Heart left ventricle (tissue), 16 donors: ENCODE measurements at regions of chr14 and their contacts with region 1.

Region 1: DNA sequence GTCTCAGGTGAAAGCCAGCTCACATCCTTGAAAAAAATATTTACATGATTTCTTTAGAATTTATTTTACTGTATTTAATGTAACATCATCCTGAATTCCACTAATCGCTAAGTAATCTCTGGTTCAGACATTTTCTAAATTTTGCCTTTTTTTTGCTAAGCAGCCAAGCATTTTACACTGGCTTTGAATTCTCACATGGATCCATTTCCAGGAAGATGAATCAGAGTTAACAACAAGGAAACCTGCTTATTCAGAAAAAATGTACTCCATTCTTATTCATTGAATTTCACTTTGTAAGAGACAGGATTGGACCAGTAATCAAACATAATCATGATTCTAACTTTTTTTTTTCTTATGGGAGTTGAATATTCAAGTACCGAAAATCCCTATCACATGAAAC is 1785.1 kb upstream of the FLRT2 start:
- DNase-seq: no peak
- ATAC-seq: no peak
- H3K4me3 ChIP-seq: no peak overlapping the region
- H3K27ac ChIP-seq: no peak overlapping the region
- H3K4me1 ChIP-seq: no peaks in the 10 kb centered on the region
- H3K27me3 ChIP-seq: no peaks in the 10 kb centered on the region
- CTCF ChIP-seq: no peak
- POLR2A ChIP-seq: no peak

Region 2: GRCh38 chr14:83733670-83734069 is 11.2 kb before region 1 on chr14:
- intact Hi-C with region 1: loop called in 1 of 10 experiments (anchors 1 kb)
- DNase-seq: no peak
- ATAC-seq: no peak
- H3K4me3 ChIP-seq: no peak overlapping the region
- H3K27ac ChIP-seq: no peak overlapping the region
- H3K4me1 ChIP-seq: no peaks in the 10 kb centered on the region
- H3K27me3 ChIP-seq: no peaks in the 10 kb centered on the region
- CTCF ChIP-seq: no peak
- POLR2A ChIP-seq: no peak